Mammary epithelial cell (primary cell): ENCODE measurements at regions of chr22 and their contacts with region 1.

Region 1: GRCh38 chr22:25081409-25081824 is 118.2 kb upstream of the CRYBB3 start:
- DNase-seq: peak; percentile 14
- H3K4me3 ChIP-seq: no peak overlapping the region
- H3K27ac ChIP-seq: no peak overlapping the region
- H3K4me1 ChIP-seq: peaks cover 8% of the 10 kb centered on the region
- H3K27me3 ChIP-seq: no peaks in the 10 kb centered on the region
- CTCF ChIP-seq: peak; percentile 45 to 61

Region 2: DNA sequence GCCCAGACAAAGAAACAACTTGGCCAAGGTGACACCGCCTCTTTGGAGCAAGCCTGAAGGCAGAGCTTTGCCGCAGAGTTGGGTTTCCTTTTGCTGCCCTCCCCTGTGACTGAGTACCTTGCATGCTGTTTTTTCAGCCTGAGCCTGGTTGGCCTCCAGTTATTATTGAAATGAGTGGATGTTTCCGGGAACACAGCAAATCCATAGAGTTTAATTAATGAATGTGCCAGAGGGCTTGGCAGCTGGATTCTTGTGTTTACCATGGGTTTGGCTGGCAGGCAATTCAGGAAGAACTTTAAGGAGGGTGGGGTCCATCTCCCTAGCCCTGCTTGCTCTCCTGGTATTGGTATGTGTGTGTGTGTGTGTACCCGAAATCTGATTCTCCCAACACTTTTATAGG is 52.6 kb after region 1 on chr22:
- CTCF ChIA-PET with region 1: no interaction called
- dilution Hi-C with region 1: no loop called
- in situ Hi-C with region 1: no loop called
- intact Hi-C with region 1: no loop called
- DNase-seq: peak; percentile 62
- H3K4me3 ChIP-seq: no peak overlapping the region
- H3K27ac ChIP-seq: no peak overlapping the region
- H3K4me1 ChIP-seq: peaks cover 11% of the 10 kb centered on the region
- H3K27me3 ChIP-seq: no peaks in the 10 kb centered on the region
- CTCF ChIP-seq: no peak

Region 3: GRCh38 chr22:25179250-25179631 is 97.8 kb after region 1 on chr22:
- CTCF ChIA-PET with region 1: no interaction called
- dilution Hi-C with region 1: no loop called
- in situ Hi-C with region 1: no loop called
- intact Hi-C with region 1: no loop called
- DNase-seq: no peak
- H3K4me3 ChIP-seq: no peak overlapping the region
- H3K27ac ChIP-seq: no peak overlapping the region
- H3K4me1 ChIP-seq: peaks cover 18% of the 10 kb centered on the region
- H3K27me3 ChIP-seq: no peaks in the 10 kb centered on the region
- CTCF ChIP-seq: no peak

Region 4: GRCh38 chr22:25219948-25220442 is 138.6 kb after region 1 on chr22:
- CTCF ChIA-PET with region 1: no interaction called
- dilution Hi-C with region 1: no loop called
- in situ Hi-C with region 1: no loop called
- intact Hi-C with region 1: no loop called
- DNase-seq: peak; percentile 23
- H3K4me3 ChIP-seq: no peak overlapping the region
- H3K27ac ChIP-seq: no peak overlapping the region
- H3K4me1 ChIP-seq: no peaks in the 10 kb centered on the region
- H3K27me3 ChIP-seq: no peaks in the 10 kb centered on the region
- CTCF ChIP-seq: no peak

Region 5: GRCh38 chr22:25334162-25334490 is 252.7 kb after region 1 on chr22:
- CTCF ChIA-PET with region 1: no interaction called
- dilution Hi-C with region 1: no loop called
- in situ Hi-C with region 1: no loop called
- intact Hi-C with region 1: loop called (anchors 5 kb)
- DNase-seq: peak; percentile 21
- H3K4me3 ChIP-seq: no peak overlapping the region
- H3K27ac ChIP-seq: no peak overlapping the region
- H3K4me1 ChIP-seq: no peaks in the 10 kb centered on the region
- H3K27me3 ChIP-seq: no peaks in the 10 kb centered on the region
- CTCF ChIP-seq: peak; percentile 40 to 67